Heart right ventricle (tissue), 16 donors: ENCODE measurements at regions of chr4 and their contacts with region 1.

Region 1: DNA sequence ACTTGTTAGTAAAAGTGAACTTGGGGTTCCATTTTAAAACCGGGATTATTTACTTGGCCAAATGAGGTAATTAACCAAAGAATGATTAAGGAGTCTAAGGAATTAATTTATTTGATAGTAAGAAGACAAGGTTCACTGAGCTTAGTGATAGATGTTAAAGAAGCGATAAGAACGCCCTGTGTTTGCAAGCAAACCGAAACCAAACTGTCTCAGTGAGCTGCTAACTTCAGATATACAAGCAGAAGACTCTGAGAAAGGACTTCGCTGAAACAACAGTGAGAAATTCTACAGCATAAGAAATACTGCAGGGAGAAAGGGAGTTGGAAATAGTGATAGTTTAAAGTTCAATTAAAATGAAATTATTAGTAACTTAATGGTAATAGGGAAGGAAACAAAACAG is 37.6 kb upstream of the SHISA3 start:
- DNase-seq: no peak
- ATAC-seq: no peak
- H3K4me3 ChIP-seq: peak overlapping the region in 6 of 10 donors; percentile 7 to 32 (median 23)
- H3K27ac ChIP-seq: peak overlapping the region in 2 of 10 donors; percentile 15 to 34
- H3K4me1 ChIP-seq: peaks cover 0 to 5% (median 0%) of the 10 kb centered on the region in 9 donors
- H3K27me3 ChIP-seq: peaks cover 0 to 16% (median 0%) of the 10 kb centered on the region in 7 donors
- CTCF ChIP-seq: no peak

Region 2: GRCh38 chr4:42296196-42296595 is 63.5 kb before region 1 on chr4:
- intact Hi-C with region 1: loop called in 1 of 10 experiments (anchors 10 kb)
- DNase-seq: no peak
- ATAC-seq: no peak
- H3K4me3 ChIP-seq: no peak overlapping the region
- H3K27ac ChIP-seq: no peak overlapping the region
- H3K4me1 ChIP-seq: no peaks in the 10 kb centered on the region
- H3K27me3 ChIP-seq: peaks cover 0 to 2% (median 0%) of the 10 kb centered on the region in 7 donors
- CTCF ChIP-seq: no peak

Region 3: GRCh38 chr4:42555828-42556227 is 196.1 kb after region 1 on chr4:
- intact Hi-C with region 1: no loop called
- DNase-seq: no peak
- ATAC-seq: no peak
- H3K4me3 ChIP-seq: no peak overlapping the region
- H3K27ac ChIP-seq: no peak overlapping the region
- H3K4me1 ChIP-seq: no peaks in the 10 kb centered on the region
- H3K27me3 ChIP-seq: no peaks in the 10 kb centered on the region
- CTCF ChIP-seq: no peak

Region 4: DNA sequence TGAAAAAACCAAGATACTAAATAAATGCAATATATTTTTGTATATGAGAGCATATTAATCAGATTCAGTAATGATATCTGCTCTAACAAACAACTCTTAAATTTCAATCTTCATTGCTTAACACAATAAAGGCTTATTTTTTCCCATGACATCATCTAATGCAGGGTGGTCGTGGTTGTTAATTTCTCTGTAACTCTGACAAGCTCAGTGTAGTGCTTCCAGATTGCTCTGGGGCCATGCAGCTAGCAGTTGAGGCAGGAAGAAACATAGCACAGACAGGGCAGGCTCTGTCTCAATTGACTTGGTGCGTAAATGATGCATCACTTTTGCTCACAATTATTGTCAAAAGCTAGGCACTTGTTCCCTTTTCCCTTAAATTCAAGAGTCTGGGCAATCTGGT is 531.9 kb after region 1 on chr4:
- intact Hi-C with region 1: no loop called
- DNase-seq: no peak
- ATAC-seq: no peak
- H3K4me3 ChIP-seq: no peak overlapping the region
- H3K27ac ChIP-seq: no peak overlapping the region
- H3K4me1 ChIP-seq: no peaks in the 10 kb centered on the region
- H3K27me3 ChIP-seq: peaks cover 0 to 4% (median 0%) of the 10 kb centered on the region in 7 donors
- CTCF ChIP-seq: no peak